ENCODE measurements at regions of chr19 and their contacts with region 1.

Region 1: GRCh38 chr19:1131738-1132551 is 28.2 kb downstream of the GPX4 start:
- DNase-seq: peak; percentile 97
- H3K4me3 Mint-ChIP-seq: peak overlapping the region; percentile 93
- H3K27ac Mint-ChIP-seq: peak overlapping the region; percentile 90
- H3K4me1 Mint-ChIP-seq: peaks cover 19% of the 10 kb centered on the region
- H3K27me3 Mint-ChIP-seq: no peaks in the 10 kb centered on the region

Region 2: DNA sequence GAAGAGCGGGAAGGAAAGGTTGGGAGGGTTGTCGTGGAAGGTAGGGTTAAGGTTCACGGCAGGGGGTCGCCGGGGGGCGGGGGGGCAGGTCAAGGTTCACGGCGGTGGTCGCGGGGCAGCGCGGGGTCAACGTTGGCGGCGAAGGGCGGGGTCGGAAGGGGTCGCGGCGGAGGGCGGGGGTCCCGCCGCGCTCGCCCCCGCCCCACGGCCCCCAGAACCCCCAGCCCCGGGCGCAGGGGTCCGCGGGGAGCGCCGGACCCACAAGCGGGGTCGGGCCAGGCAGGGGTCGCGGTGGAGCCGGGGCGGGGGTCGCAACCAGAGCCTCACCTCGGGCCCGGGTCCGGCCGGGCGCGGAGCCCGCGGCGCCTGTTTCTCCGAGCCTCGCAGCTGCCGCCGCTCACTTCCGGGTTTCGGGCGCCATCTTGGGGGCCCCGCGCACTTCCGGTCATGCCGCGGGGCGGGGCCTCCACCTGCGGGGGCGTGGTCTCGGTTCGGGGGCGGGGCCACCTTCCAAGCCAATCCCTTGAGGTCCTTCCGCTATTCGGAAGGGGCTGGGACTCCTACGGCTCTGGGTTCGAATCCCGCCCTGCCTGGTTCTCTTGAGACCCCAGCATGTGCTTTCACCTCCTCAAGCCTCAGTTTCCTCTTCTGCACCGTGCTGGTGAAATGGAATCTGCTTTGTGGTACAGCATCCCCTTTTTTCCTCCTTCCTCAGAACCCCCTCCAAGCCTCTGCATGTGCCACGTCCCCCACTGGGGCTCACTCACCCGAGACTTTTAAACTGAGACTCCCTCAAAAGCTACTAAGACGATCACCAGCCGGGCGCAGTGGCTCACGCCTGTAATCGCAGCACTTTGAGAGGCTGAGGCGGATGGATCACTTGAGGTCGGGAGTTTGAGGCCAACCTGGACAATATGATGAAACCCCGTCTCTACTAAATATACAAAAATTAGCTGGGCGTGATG is 42.2 kb after region 1 on chr19 and contains the start of gene SBNO2:
- intact Hi-C with region 1: loop called (anchors 5 kb)
- DNase-seq: peak; percentile 98
- H3K4me3 Mint-ChIP-seq: peak within 1 kb of the TSS; percentile 94
- H3K27ac Mint-ChIP-seq: peak within 1 kb of the TSS; percentile 91
- H3K4me1 Mint-ChIP-seq: peaks cover 22% of the 10 kb centered on the region
- H3K27me3 Mint-ChIP-seq: no peaks in the 10 kb centered on the region
- total RNA-seq, gene SBNO2: 97.1 and 98.9 TPM in 2 replicates

Region 3: DNA sequence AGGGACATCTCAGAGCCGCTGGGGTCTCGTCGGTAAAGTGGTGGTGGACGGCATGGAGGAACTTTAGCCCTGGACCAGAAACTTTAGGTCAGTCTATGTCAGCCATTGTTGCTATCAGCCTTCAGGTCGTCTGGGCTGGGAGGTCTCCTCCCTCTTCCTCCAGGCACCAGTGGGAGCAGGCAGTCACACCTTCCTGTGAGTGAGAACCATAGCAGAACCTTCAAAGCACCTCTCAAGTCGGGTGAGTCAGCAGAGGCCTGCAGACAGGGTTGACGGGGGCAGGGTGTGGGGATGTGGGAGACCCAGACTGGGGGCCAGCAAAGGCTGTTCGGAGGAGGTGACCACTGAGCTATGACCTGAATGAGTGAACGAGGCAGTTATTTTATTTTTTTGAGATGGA is 57.5 kb after region 1 on chr19:
- intact Hi-C with region 1: loop called (anchors 5 kb)
- DNase-seq: peak; percentile 85
- H3K4me3 Mint-ChIP-seq: peak overlapping the region; percentile 36
- H3K27ac Mint-ChIP-seq: peak overlapping the region; percentile 68
- H3K4me1 Mint-ChIP-seq: peaks cover 27% of the 10 kb centered on the region
- H3K27me3 Mint-ChIP-seq: no peaks in the 10 kb centered on the region

Region 4: DNA sequence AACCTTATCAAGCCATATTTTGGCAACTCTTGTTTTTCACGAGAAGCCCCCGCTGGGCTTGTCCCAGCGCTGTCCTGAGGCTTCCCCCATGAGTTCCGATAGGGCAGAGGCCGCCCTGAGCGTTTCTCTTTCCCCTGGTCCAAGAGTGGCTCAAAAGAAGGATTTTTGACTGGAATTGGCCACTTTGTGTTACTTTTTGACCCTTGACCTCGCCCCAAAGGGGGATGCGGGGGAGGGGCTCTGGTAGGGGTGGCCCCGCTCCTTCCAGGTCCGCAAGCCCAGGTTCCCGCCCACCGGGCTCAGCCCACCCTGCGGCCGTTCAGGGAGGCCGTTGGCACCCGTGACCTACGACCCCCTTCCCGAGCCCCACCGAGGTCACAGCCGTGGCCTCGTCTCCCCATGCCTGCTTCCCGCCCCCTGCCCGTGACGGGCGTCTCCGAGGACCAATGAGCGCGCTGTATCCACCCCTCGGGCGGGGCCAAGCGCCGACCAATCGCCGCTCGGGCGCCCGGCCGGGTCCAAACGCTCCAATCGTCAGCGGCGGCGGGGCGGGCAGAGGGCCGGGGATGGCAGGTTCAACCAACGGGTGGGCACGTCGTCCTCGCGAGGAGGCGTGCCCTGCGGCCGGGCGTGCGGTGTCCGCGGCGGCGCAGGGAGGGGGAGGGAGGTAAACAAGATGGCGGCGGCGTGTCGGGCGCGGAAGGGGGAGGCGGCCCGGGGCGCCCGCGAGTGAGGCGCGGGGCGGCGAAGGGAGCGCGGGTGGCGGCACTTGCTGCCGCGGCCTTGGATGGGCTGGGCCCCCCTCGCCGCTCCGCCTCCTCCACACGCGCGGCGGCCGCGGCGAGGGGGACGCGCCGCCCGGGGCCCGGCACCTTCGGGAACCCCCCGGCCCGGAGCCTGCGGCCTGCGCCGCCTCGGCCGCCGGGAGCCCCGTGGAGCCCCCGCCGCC is 73.4 kb after region 1 on chr19 and contains the start of gene STK11:
- intact Hi-C with region 1: no loop called
- DNase-seq: peak; percentile 100
- H3K4me3 Mint-ChIP-seq: peak within 1 kb of the TSS; percentile 97
- H3K27ac Mint-ChIP-seq: peak within 1 kb of the TSS; percentile 90
- H3K4me1 Mint-ChIP-seq: peaks cover 21% of the 10 kb centered on the region
- H3K27me3 Mint-ChIP-seq: no peaks in the 10 kb centered on the region
- total RNA-seq, gene STK11: 70.3 and 70.9 TPM in 2 replicates

Measured in activated CD4-positive, alpha-beta T cell treated with anti-CD3 and anti-CD28 coated beads, Interleukin-2, amount 10 ng/mL, durations not matched to agents 24 days and 14 days (primary cell).